ENCODE measurements at regions of chr2 and their contacts with region 1.

Region 1: GRCh38 chr2:165401285-165401852 is 68.1 kb upstream of the CSRNP3 start:
- DNase-seq: peak; percentile 56
- ATAC-seq: peak; percentile 57; the same call in 1 of the 2 replicates
- H3K4me3 ChIP-seq: no peak overlapping the region
- H3K27ac ChIP-seq: no peak overlapping the region
- H3K4me1 ChIP-seq: no peaks in the 10 kb centered on the region
- H3K27me3 ChIP-seq: peaks cover 9% of the 10 kb centered on the region; the same call in 1 of the 2 replicates
- CTCF ChIP-seq: peak; percentile 52 to 77 (median 62)
- POLR2A ChIP-seq: no peak
- RAD21 ChIP-seq: peak; percentile 75

Region 2: DNA sequence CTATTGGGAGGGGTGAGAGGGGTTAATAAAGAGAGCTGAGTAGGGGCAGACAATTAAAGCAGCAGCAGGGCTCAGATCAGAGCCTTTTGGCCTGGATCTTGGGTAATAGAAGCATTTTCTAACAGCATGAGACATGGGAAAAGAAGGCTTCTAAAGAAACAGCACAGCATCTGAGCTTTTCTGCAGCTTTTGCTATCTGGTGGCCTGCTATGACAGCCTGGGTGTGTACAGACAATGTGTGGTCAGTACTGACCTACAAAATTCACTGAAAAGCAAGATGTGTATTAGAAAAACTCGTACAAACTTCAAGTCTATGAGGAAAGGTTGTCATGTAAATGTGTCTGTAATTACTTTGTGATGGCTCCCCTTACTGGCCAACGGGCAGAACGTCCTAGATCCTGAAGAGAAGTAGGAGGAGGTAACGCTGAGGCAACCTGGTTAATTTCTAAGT is 297.1 kb after region 1 on chr2:
- CTCF ChIA-PET with region 1: no interaction called
- POLR2A ChIA-PET with region 1: no interaction called
- RAD21 ChIA-PET with region 1: no interaction called
- intact Hi-C with region 1: loop called (anchors 5 kb)
- DNase-seq: peak; percentile 19
- ATAC-seq: peak; percentile 83
- H3K4me3 ChIP-seq: no peak overlapping the region
- H3K27ac ChIP-seq: no peak overlapping the region
- H3K4me1 ChIP-seq: no peaks in the 10 kb centered on the region
- H3K27me3 ChIP-seq: peaks cover 39% of the 10 kb centered on the region; the same call in 1 of the 2 replicates
- CTCF ChIP-seq: peak; percentile 6 to 42 (median 35); a peak in 4 of 6 replicates
- POLR2A ChIP-seq: no peak
- RAD21 ChIP-seq: peak; percentile 39; the same call in 1 of the 2 replicates

Region 3: GRCh38 chr2:165874445-165875039 is 473.2 kb after region 1 on chr2:
- CTCF ChIA-PET with region 1: interaction called, 8 read pairs
- POLR2A ChIA-PET with region 1: no interaction called
- RAD21 ChIA-PET with region 1: no interaction called
- intact Hi-C with region 1: loop called (anchors 1 kb)
- DNase-seq: peak; percentile 28
- ATAC-seq: peak; percentile 84
- H3K4me3 ChIP-seq: no peak overlapping the region
- H3K27ac ChIP-seq: no peak overlapping the region
- H3K4me1 ChIP-seq: no peaks in the 10 kb centered on the region
- H3K27me3 ChIP-seq: no peaks in the 10 kb centered on the region
- CTCF ChIP-seq: peak; percentile 58 to 63 (median 59); a peak in 5 of 6 replicates
- POLR2A ChIP-seq: no peak
- RAD21 ChIP-seq: peak; percentile 78

Region 4: GRCh38 chr2:166000401-166000800 is 599.0 kb after region 1 on chr2:
- CTCF ChIA-PET with region 1: no interaction called
- POLR2A ChIA-PET with region 1: no interaction called
- RAD21 ChIA-PET with region 1: no interaction called
- intact Hi-C with region 1: no loop called
- DNase-seq: no peak
- ATAC-seq: no peak
- H3K4me3 ChIP-seq: no peak overlapping the region
- H3K27ac ChIP-seq: no peak overlapping the region
- H3K4me1 ChIP-seq: no peaks in the 10 kb centered on the region
- H3K27me3 ChIP-seq: peaks cover 47% of the 10 kb centered on the region
- CTCF ChIP-seq: no peak
- POLR2A ChIP-seq: no peak
- RAD21 ChIP-seq: no peak

Region 5: GRCh38 chr2:166127217-166128155 is 726.1 kb after region 1 on chr2 and contains the start of gene SCN1A:
- CTCF ChIA-PET with region 1: no interaction called
- POLR2A ChIA-PET with region 1: no interaction called
- RAD21 ChIA-PET with region 1: no interaction called
- intact Hi-C with region 1: loop called (anchors 10 kb)
- DNase-seq: peak; percentile 32
- ATAC-seq: peak; percentile 70
- H3K4me3 ChIP-seq: no peak within 1 kb of the TSS
- H3K27ac ChIP-seq: no peak within 1 kb of the TSS
- H3K4me1 ChIP-seq: no peaks in the 10 kb centered on the region
- H3K27me3 ChIP-seq: peaks cover 62% of the 10 kb centered on the region
- CTCF ChIP-seq: peak; percentile 43 to 73 (median 49); a peak in 4 of 6 replicates
- POLR2A ChIP-seq: no peak
- RAD21 ChIP-seq: peak; percentile 70
- total RNA-seq, gene SCN1A: not detected